PC-9 (cell line): ENCODE measurements at regions of chr11 and their contacts with region 1.

Region 1: DNA sequence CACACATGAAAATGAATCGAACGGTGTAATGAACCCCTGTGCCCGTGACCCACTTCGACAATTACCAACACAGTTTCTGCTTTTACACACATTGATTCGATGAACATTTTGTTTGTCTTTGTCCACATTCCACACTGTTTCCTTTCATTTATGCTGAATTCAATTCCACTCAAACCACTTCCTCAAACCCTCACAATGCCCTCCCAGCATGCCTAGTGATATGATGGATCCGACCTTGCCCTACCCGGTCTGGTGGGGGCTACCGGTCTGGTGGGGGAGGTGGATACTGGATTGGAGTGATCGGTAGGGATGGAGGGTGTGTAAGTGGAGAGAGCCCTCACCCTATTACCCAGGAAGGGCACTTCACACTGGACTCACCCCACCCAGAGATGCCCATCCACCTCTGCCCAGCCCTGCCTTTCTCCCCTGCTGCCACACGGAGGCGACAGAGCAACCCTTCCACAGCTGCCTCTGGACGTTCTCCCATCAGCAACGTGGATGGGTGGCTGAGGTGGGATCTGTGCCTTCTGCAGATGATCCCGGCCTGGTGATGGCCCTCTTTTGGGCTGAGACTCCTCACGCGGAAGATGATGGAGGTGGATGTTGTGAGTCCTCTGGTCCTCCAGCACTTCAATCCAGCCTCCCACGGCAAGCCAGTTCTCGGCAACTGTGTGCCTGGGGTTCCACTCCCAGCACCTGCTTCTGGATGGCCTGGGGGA is 33.0 kb upstream of the P2RY2 start:
- DNase-seq: peak; percentile 80 to 88
- H3K4me3 ChIP-seq: peak overlapping the region; percentile 36; the same call in 1 of the 2 replicates
- H3K27ac ChIP-seq: peak overlapping the region; percentile 82
- H3K4me1 ChIP-seq: peaks cover 49% of the 10 kb centered on the region
- H3K27me3 ChIP-seq: no peaks in the 10 kb centered on the region
- CTCF ChIP-seq: peak; percentile 96

Region 2: GRCh38 chr11:73170140-73170539 is 15.0 kb before region 1 on chr11:
- CTCF ChIA-PET with region 1: interaction called, 12 read pairs
- POLR2A ChIA-PET with region 1: no interaction called
- intact Hi-C with region 1: no loop called
- DNase-seq: no peak
- H3K4me3 ChIP-seq: no peak overlapping the region
- H3K27ac ChIP-seq: no peak overlapping the region
- H3K4me1 ChIP-seq: peaks cover 12% of the 10 kb centered on the region; the same call in 1 of the 2 replicates
- H3K27me3 ChIP-seq: no peaks in the 10 kb centered on the region
- CTCF ChIP-seq: no peak

Region 3: DNA sequence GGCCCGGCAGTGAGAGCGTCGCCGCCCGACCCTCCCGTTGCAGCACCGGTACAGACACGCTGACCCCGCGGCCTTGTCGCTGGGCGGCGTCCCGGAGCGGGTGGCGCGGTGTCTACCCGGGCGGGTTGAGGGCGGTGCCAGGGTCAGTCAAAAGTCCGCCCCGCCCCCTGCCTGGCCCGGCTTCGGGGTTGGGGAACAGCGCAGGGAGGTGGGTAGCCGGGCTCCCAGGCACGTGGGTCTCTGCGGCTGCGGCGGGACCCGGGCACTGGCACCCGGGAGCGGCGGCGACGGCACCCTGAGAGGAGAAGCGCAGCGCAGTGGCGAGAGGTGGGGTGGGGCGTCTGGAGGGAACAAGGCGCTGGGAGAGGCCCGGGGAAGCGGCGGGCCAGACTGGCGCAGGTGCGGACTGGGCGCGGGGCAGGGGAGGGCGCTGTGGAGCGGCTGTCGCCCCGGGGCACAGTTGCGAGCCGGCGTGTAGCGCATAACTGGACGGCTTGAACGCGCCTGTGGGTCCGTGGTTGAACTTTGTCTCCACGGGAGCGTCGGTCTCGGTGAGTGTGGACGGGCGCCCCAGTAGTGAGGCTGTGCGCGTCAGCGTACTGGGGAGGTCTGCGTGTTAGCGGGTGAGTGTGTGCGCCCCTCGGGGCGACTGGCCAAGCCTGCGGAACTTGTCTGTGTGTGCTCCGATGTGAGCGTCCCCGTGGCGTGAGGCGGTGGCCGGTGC is 33.2 kb after region 1 on chr11 and contains the start of gene P2RY2:
- CTCF ChIA-PET with region 1: interaction called, 9 read pairs
- POLR2A ChIA-PET with region 1: interaction called, 3 read pairs
- intact Hi-C with region 1: loop called (anchors 1 kb)
- DNase-seq: peak; percentile 73 to 93
- H3K4me3 ChIP-seq: peak within 1 kb of the TSS; percentile 69
- H3K27ac ChIP-seq: peak within 1 kb of the TSS; percentile 46
- H3K4me1 ChIP-seq: peaks cover 44% of the 10 kb centered on the region
- H3K27me3 ChIP-seq: no peaks in the 10 kb centered on the region
- CTCF ChIP-seq: peak; percentile 64
- total RNA-seq, gene P2RY2: 19.8 and 22.5 TPM in 2 replicates

Region 4: GRCh38 chr11:73236854-73237253 is 51.7 kb after region 1 on chr11:
- CTCF ChIA-PET with region 1: interaction called, 10 read pairs
- POLR2A ChIA-PET with region 1: no interaction called
- intact Hi-C with region 1: loop called (anchors 1 kb)
- DNase-seq: peak; percentile 65 to 66
- H3K4me3 ChIP-seq: no peak overlapping the region
- H3K27ac ChIP-seq: no peak overlapping the region
- H3K4me1 ChIP-seq: peaks cover 48% of the 10 kb centered on the region
- H3K27me3 ChIP-seq: no peaks in the 10 kb centered on the region
- CTCF ChIP-seq: peak; percentile 89

Region 5: DNA sequence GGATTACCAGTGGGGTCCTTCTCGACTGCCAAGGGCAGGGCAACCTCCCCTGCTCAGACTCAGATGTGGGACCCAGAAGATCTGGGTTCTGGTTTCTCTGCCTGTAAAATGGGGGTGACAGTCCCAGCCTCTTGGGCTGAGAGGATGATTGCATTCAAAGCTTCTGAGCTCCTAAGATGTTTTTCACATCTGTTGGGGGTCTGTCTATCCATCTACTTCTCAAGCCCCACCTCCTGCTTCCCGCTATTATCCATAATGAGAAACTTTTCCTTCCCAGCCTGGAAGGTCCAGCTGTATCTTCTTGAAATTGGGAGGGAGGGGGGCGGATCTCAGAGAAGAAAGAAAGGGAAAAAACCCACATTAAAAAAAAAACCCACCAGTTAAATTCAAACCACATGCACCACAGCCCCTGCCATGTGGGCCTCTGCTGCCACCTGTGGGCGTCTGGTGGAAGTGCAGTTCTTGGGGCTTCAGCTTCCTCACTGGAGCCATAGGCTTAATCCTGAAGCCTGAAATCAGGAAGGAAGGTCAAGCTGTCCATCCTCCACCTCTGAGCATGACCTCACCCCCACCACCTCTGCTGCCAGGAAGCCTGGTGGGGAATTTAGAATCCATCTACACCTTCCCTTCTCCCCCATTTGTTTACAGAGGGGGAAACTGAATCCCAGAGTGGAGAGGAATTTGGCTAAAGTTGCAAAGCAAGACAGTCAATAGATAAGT is 150.3 kb after region 1 on chr11:
- CTCF ChIA-PET with region 1: no interaction called
- POLR2A ChIA-PET with region 1: no interaction called
- intact Hi-C with region 1: loop called (anchors 1 kb)
- DNase-seq: peak; percentile 67 to 90
- H3K4me3 ChIP-seq: no peak overlapping the region
- H3K27ac ChIP-seq: no peak overlapping the region
- H3K4me1 ChIP-seq: peaks cover 20% of the 10 kb centered on the region
- H3K27me3 ChIP-seq: no peaks in the 10 kb centered on the region
- CTCF ChIP-seq: peak; percentile 99